ENCODE measurements at regions of chr16 and their contacts with region 1.

Region 1: GRCh38 chr16:84062734-84063640 is 20.4 kb upstream of the SLC38A8 start:
- DNase-seq: peak; percentile 63 to 70 (median 70)
- ATAC-seq: peak; percentile 82 to 90 (median 88)
- H3K4me3 ChIP-seq: no peak overlapping the region
- H3K27ac ChIP-seq: no peak overlapping the region
- H3K4me1 ChIP-seq: no peaks in the 10 kb centered on the region
- H3K27me3 ChIP-seq: no peaks in the 10 kb centered on the region
- CTCF ChIP-seq: peak; percentile 63 to 91 (median 82)
- POLR2A ChIP-seq: no peak

Region 2: GRCh38 chr16:83917152-83918120 is 145.6 kb before region 1 on chr16:
- intact Hi-C with region 1: loop called in 1 of 2 experiments (anchors 5 kb)
- DNase-seq: peak in 1 of 3 donors; percentile 55
- ATAC-seq: peak in 1 of 4 donors; percentile 30
- H3K4me3 ChIP-seq: no peak overlapping the region
- H3K27ac ChIP-seq: no peak overlapping the region
- H3K4me1 ChIP-seq: no peaks in the 10 kb centered on the region
- H3K27me3 ChIP-seq: no peaks in the 10 kb centered on the region
- CTCF ChIP-seq: no peak
- POLR2A ChIP-seq: no peak

Region 3: DNA sequence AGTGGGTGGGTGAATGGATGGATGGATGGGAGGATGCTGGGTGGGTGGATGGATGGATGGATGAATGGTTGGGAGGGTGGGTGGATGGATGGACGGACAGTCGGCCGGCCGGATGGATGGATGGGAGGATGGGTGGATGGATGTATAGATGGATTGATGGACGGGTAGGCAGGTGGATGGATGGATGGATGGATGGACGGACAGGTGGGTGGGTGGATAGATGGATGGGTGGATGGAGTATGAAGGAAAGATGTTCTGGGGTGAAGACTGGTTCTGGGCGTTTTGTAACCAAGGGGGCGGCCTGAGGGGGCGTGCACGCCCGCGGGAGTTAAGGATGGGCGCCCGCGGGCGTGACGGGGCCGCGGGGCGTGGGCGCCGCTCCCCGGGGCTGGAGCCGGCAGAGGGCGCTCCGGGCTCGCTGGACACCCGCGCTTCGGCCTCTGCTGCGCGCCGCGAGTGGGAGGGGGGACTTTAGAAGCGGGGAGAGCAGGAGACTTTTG is 95.1 kb before region 1 on chr16 and contains the start of gene NECAB2:
- intact Hi-C with region 1: loop called in 1 of 2 experiments (anchors 10 kb)
- DNase-seq: peak in 1 of 3 donors; percentile 69
- ATAC-seq: peak; percentile 5 to 58 (median 40)
- H3K4me3 ChIP-seq: no peak within 1 kb of the TSS
- H3K27ac ChIP-seq: no peak within 1 kb of the TSS
- H3K4me1 ChIP-seq: peaks cover 0 to 4% (median 0%) of the 10 kb centered on the region in 4 donors
- H3K27me3 ChIP-seq: no peaks in the 10 kb centered on the region
- CTCF ChIP-seq: peak; percentile 35 to 69 (median 47)
- POLR2A ChIP-seq: no peak
- total RNA-seq, gene NECAB2: 0.56 to 26.8 (median 7.1) TPM

Measured in right lobe of liver (tissue), 6 donors.